ENCODE measurements at regions of chr2 and their contacts with region 1.

Region 1: DNA sequence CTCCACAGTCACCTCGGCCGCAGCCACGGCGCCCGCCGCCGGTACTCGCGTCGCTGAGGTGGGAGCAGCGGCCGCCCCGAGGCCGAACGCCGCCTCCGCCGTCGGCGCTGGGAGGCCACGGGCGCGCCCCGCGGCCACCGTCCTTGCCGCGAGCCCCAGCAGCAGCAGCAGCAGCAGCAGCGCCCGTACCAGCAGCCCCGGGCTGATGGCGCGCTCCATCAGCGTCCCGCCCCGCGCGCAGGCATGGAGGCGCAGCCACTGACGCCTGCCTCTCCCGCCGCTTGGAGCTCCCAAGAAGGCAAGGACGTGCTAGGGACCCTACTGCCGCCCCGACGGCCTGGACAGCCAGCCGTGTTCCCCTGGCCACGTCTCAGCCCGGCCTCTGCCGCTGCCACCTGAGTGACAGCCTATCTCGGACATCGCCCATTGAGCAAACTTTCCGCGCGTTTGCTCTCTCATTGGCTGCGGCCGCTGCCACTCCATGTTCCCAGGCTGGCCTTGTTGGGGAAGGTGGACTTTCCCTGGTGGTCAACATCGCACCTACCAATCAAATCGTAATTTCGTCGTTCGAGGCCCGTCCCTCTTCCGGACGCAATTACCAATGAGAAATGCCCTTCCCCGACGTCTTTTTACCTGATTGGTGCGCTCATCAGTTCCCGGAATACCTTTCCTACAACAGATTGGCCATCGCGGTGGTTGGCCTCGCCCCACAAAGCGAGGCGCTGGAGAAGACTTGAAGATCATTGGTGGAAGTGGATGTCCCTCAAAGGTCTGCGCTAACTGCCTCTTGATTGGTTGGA is at the start of gene EIF2AK3:
- DNase-seq: peak; percentile 85 to 99 (median 97)
- ATAC-seq: peak; percentile 89
- H3K4me3 ChIP-seq: peak within 1 kb of the TSS; percentile 93
- H3K4me3 Mint-ChIP-seq: peak within 1 kb of the TSS in 6 of 10 donors; percentile 94 to 98 (median 96)
- H3K27ac ChIP-seq: peak within 1 kb of the TSS; percentile 96
- H3K27ac Mint-ChIP-seq: peak within 1 kb of the TSS in 7 of 9 donors; percentile 86 to 98 (median 95)
- H3K4me1 ChIP-seq: peaks cover 12 to 18% of the 10 kb centered on the region in 2 donors
- H3K4me1 Mint-ChIP-seq: peaks cover 5 to 19% (median 13%) of the 10 kb centered on the region in 7 donors
- H3K27me3 ChIP-seq: no peaks in the 10 kb centered on the region
- H3K27me3 Mint-ChIP-seq: no peaks in the 10 kb centered on the region
- total RNA-seq, gene EIF2AK3: 26.1 to 36.5 (median 28.6) TPM

Region 2: DNA sequence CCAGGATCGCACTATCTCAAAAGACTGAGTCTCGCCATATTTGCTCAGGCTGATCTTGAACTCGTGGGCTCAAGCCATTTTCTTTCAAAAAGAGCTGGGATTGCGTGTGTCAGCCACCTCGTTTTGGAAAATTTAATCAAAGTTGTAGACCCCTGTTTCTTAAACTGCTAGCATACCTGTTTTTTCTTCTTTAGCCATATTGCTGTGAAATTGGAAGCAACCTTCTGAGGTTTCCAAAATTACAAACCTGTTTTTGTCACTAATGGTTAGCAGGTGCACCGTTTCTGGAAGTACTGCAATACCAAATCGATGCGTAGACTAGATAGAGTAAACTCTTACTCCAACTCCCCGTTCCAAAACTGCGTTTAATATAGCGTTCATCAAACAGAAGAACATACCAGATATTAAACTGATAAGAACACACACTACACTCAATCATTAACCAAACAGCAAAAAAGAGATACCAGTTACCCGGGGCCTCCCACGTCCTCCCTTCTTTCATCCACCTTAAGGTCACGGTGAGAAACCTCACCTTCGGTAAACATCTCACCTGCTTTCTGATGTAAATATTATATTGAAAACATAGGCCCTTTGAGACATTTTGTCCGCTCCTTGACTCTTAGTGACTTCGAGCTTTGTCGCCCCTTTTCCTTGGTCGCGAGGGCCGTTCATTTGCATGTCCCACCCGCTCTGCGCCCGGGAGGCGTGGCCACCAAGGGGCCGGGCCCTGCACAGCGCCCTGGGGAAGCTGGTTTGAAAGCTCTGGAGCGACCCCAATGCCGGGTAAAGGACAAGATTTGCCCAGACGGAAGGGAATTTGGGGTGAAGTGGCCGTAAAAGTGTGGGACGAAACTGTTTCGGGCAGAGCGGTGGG is 610.9 kb before region 1 on chr2 and contains the start of gene RNU2-63P:
- CTCF ChIA-PET with region 1: no interaction called
- POLR2A ChIA-PET with region 1: no interaction called
- intact Hi-C with region 1: loop called in 1 of 2 experiments (anchors 1 kb)
- DNase-seq: peak; percentile 70 to 87 (median 84)
- ATAC-seq: peak; percentile 87
- H3K4me3 ChIP-seq: peak within 1 kb of the TSS; percentile 93
- H3K4me3 Mint-ChIP-seq: peak within 1 kb of the TSS; percentile 95 to 99 (median 97)
- H3K27ac ChIP-seq: peak within 1 kb of the TSS; percentile 90
- H3K27ac Mint-ChIP-seq: peak within 1 kb of the TSS; percentile 97 to 100 (median 99)
- H3K4me1 ChIP-seq: peaks cover 0 to 4% of the 10 kb centered on the region in 2 donors
- H3K4me1 Mint-ChIP-seq: peaks cover 5 to 29% (median 21%) of the 10 kb centered on the region in 7 donors
- H3K27me3 ChIP-seq: no peaks in the 10 kb centered on the region
- H3K27me3 Mint-ChIP-seq: no peaks in the 10 kb centered on the region
- total RNA-seq, gene RNU2-63P: 14.5 to 28.7 (median 16.6) TPM in 3 of 5 experiments, not detected in the others

Region 3: GRCh38 chr2:88600038-88600465 is 27.2 kb before region 1 on chr2:
- CTCF ChIA-PET with region 1: no interaction called
- POLR2A ChIA-PET with region 1: no interaction called
- intact Hi-C with region 1: loop called (anchors 1 to 2 kb)
- DNase-seq: peak in 7 of 9 donors; percentile 9 to 81 (median 28)
- ATAC-seq: peak; percentile 96
- H3K4me3 ChIP-seq: no peak overlapping the region
- H3K4me3 Mint-ChIP-seq: peak overlapping the region in 1 of 10 donors; percentile 40
- H3K27ac ChIP-seq: no peak overlapping the region
- H3K27ac Mint-ChIP-seq: peak overlapping the region in 7 of 9 donors; percentile 6 to 81 (median 31)
- H3K4me1 ChIP-seq: peaks cover 0 to 5% of the 10 kb centered on the region in 2 donors
- H3K4me1 Mint-ChIP-seq: peaks cover 26 to 63% (median 53%) of the 10 kb centered on the region in 7 donors
- H3K27me3 ChIP-seq: no peaks in the 10 kb centered on the region
- H3K27me3 Mint-ChIP-seq: no peaks in the 10 kb centered on the region

Region 4: DNA sequence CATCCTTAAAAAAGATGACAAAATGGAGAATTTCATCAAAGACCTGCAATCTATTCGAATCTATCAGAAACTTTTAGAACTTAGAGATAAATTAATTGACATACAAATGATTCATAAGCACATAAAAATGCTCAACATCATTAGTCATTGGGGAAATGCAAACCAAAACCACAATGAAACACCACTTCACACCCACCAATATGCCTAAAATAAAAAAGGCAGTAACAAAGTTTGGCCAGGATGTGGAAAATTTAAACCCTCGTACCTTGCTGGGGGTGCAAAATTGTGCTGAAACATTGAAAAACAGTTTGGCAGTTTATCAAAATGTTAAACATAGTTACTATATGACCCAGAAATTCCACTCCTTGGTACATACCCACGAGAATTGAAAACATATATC is 11.5 kb after region 1 on chr2:
- CTCF ChIA-PET with region 1: no interaction called
- POLR2A ChIA-PET with region 1: interaction called, 5 read pairs
- intact Hi-C with region 1: loop called in 1 of 2 experiments (anchors 1 kb)
- DNase-seq: no peak
- ATAC-seq: no peak
- H3K4me3 ChIP-seq: no peak overlapping the region
- H3K4me3 Mint-ChIP-seq: no peak overlapping the region
- H3K27ac ChIP-seq: no peak overlapping the region
- H3K27ac Mint-ChIP-seq: peak overlapping the region in 1 of 9 donors; percentile 45
- H3K4me1 ChIP-seq: peaks cover 0 to 4% of the 10 kb centered on the region in 2 donors
- H3K4me1 Mint-ChIP-seq: peaks cover 0 to 57% (median 0%) of the 10 kb centered on the region in 7 donors
- H3K27me3 ChIP-seq: no peaks in the 10 kb centered on the region
- H3K27me3 Mint-ChIP-seq: peaks cover 0 to 16% (median 0%) of the 10 kb centered on the region in 5 donors

Region 5: GRCh38 chr2:88691339-88692183 is 64.3 kb after region 1 on chr2 and contains the start of gene RPIA:
- CTCF ChIA-PET with region 1: interaction called, 3 read pairs
- POLR2A ChIA-PET with region 1: interaction called, 26 read pairs
- intact Hi-C with region 1: loop called (anchors 1 kb)
- DNase-seq: peak; percentile 93 to 99 (median 98)
- ATAC-seq: peak; percentile 98
- H3K4me3 ChIP-seq: peak within 1 kb of the TSS; percentile 89
- H3K4me3 Mint-ChIP-seq: peak within 1 kb of the TSS; percentile 93 to 99 (median 98)
- H3K27ac ChIP-seq: peak within 1 kb of the TSS; percentile 83
- H3K27ac Mint-ChIP-seq: peak within 1 kb of the TSS; percentile 86 to 98 (median 94)
- H3K4me1 ChIP-seq: peaks cover 14 to 21% of the 10 kb centered on the region in 2 donors
- H3K4me1 Mint-ChIP-seq: peaks cover 24 to 70% (median 67%) of the 10 kb centered on the region in 7 donors
- H3K27me3 ChIP-seq: no peaks in the 10 kb centered on the region
- H3K27me3 Mint-ChIP-seq: no peaks in the 10 kb centered on the region
- total RNA-seq, gene RPIA: 16.4 to 38.4 (median 23.1) TPM

Region 6: GRCh38 chr2:88709181-88709641 is 82.0 kb after region 1 on chr2:
- CTCF ChIA-PET with region 1: no interaction called
- POLR2A ChIA-PET with region 1: no interaction called
- intact Hi-C with region 1: no loop called
- DNase-seq: no peak
- ATAC-seq: no peak
- H3K4me3 ChIP-seq: no peak overlapping the region
- H3K4me3 Mint-ChIP-seq: no peak overlapping the region
- H3K27ac ChIP-seq: no peak overlapping the region
- H3K27ac Mint-ChIP-seq: no peak overlapping the region
- H3K4me1 ChIP-seq: no peaks in the 10 kb centered on the region
- H3K4me1 Mint-ChIP-seq: peaks cover 0 to 45% (median 18%) of the 10 kb centered on the region in 7 donors
- H3K27me3 ChIP-seq: no peaks in the 10 kb centered on the region
- H3K27me3 Mint-ChIP-seq: no peaks in the 10 kb centered on the region

Measured in naive thymus-derived CD4-positive, alpha-beta T cell (primary cell).